ENCODE measurements at regions of chr4 and their contacts with region 1.

Region 1: DNA sequence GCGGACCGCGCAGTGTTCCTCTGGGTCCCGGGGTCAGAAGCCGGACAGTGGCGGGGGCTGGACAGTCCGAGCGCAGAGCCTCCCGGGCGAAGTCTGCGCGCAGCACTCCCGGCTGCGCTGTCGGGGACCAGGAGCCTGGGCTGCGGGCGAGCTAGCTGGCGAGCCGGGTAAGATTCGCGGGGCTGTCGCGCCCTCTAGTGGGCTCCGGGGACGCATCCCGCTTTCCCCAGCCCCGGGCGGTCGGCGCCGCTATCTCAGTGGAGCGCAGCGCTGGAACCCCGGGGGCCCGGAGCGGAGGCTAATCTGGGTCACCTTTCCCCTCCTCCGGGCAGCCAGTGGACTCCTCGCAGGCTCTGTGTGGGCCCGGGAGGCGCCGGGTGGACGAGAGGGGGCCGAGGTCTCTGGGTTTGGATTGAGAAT is 4.2 kb downstream of the PDGFRA start:
- DNase-seq: peak; percentile 81
- H3K4me3 ChIP-seq: peak overlapping the region; percentile 30 to 54 (median 52)
- H3K27ac ChIP-seq: no peak overlapping the region
- H3K4me1 ChIP-seq: peaks cover 21% of the 10 kb centered on the region
- H3K27me3 ChIP-seq: peaks cover 24% of the 10 kb centered on the region
- CTCF ChIP-seq: peak; percentile 36 to 88

Region 2: DNA sequence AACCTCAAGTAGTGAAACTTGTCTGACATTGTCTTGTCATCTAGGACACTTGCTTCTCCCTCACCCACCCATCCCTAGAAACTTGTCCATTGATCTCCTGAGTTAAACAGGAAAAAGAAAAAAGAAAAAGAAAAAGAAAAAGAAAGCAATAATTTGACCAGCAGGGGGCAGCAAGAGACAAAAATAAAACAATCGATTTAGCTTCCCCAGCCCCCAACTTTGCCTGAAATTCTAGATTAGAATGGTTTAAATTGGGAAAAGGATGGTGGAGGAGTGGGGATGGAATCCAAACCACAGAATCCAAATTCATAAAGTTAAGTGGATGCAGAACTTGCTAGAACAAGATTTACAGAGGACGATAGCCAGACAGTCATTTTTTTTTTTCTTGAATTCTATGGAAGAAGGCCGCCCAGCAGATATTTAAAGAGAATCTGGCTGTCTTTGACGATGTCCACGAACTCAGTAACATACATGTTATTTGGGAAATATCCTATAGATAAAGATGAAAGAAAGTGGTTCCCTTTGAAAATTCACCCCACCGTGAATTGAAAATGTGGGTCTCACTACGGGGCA is 1857.1 kb before region 1 on chr4:
- CTCF ChIA-PET with region 1: no interaction called
- dilution Hi-C with region 1: no loop called
- in situ Hi-C with region 1: no loop called
- intact Hi-C with region 1: loop called (anchors 1 kb)
- DNase-seq: peak; percentile 29
- H3K4me3 ChIP-seq: no peak overlapping the region
- H3K27ac ChIP-seq: no peak overlapping the region
- H3K4me1 ChIP-seq: no peaks in the 10 kb centered on the region
- H3K27me3 ChIP-seq: no peaks in the 10 kb centered on the region
- CTCF ChIP-seq: peak; percentile 37 to 55

Region 3: GRCh38 chr4:53015681-53016080 is 1217.6 kb before region 1 on chr4:
- CTCF ChIA-PET with region 1: interaction called, 5 read pairs
- dilution Hi-C with region 1: no loop called
- in situ Hi-C with region 1: loop called (anchors 25 kb)
- intact Hi-C with region 1: loop called (anchors 1 kb)
- DNase-seq: no peak
- H3K4me3 ChIP-seq: no peak overlapping the region
- H3K27ac ChIP-seq: no peak overlapping the region
- H3K4me1 ChIP-seq: no peaks in the 10 kb centered on the region
- H3K27me3 ChIP-seq: no peaks in the 10 kb centered on the region
- CTCF ChIP-seq: peak; percentile 59 to 64

Region 4: GRCh38 chr4:53490965-53491622 is 742.2 kb before region 1 on chr4:
- CTCF ChIA-PET with region 1: no interaction called
- dilution Hi-C with region 1: no loop called
- in situ Hi-C with region 1: no loop called
- intact Hi-C with region 1: loop called (anchors 5 kb)
- DNase-seq: peak; percentile 69
- H3K4me3 ChIP-seq: no peak overlapping the region
- H3K27ac ChIP-seq: no peak overlapping the region
- H3K4me1 ChIP-seq: peaks cover 4% of the 10 kb centered on the region
- H3K27me3 ChIP-seq: no peaks in the 10 kb centered on the region
- CTCF ChIP-seq: peak; percentile 70 to 84

Region 5: GRCh38 chr4:53653484-53654053 is 579.7 kb before region 1 on chr4:
- CTCF ChIA-PET with region 1: interaction called, 4 read pairs
- dilution Hi-C with region 1: no loop called
- in situ Hi-C with region 1: no loop called
- intact Hi-C with region 1: loop called (anchors 5 kb)
- DNase-seq: peak; percentile 12
- H3K4me3 ChIP-seq: no peak overlapping the region
- H3K27ac ChIP-seq: no peak overlapping the region
- H3K4me1 ChIP-seq: peaks cover 12% of the 10 kb centered on the region
- H3K27me3 ChIP-seq: no peaks in the 10 kb centered on the region
- CTCF ChIP-seq: peak; percentile 4 to 32

Region 6: GRCh38 chr4:53908661-53909078 is 324.6 kb before region 1 on chr4:
- CTCF ChIA-PET with region 1: interaction called, 18 read pairs
- dilution Hi-C with region 1: no loop called
- in situ Hi-C with region 1: loop called in 1 of 2 experiments (anchors 5 kb)
- intact Hi-C with region 1: loop called (anchors 1 kb)
- DNase-seq: peak; percentile 86
- H3K4me3 ChIP-seq: peak overlapping the region in 2 of 3 experiments; percentile 7 to 16
- H3K27ac ChIP-seq: peak overlapping the region; percentile 28
- H3K4me1 ChIP-seq: peaks cover 47% of the 10 kb centered on the region
- H3K27me3 ChIP-seq: no peaks in the 10 kb centered on the region
- CTCF ChIP-seq: peak; percentile 76 to 88

Region 7: DNA sequence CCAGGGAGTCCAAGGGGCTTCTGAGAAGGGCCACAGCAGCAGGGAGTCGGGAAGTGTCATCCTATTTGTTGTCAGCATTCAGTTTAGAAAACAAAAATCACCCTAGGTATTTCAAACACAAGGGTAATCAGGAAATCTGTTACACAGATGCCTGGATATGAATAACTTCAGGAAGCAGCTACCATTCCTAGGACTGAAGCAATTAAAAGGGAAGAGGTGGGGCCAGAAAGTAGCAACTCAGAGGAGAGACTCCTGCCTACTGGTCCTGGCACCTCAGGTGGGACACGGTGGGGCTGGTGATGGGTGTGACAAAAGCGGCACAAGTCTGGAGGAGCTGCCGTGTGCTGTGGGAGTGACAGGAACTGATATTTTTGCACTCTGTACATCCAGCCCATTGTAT is 103.7 kb after region 1 on chr4:
- CTCF ChIA-PET with region 1: no interaction called
- dilution Hi-C with region 1: no loop called
- in situ Hi-C with region 1: no loop called
- intact Hi-C with region 1: no loop called
- DNase-seq: no peak
- H3K4me3 ChIP-seq: no peak overlapping the region
- H3K27ac ChIP-seq: no peak overlapping the region
- H3K4me1 ChIP-seq: no peaks in the 10 kb centered on the region
- H3K27me3 ChIP-seq: no peaks in the 10 kb centered on the region
- CTCF ChIP-seq: no peak

Region 8: GRCh38 chr4:56112377-56112776 is 1879.1 kb after region 1 on chr4:
- CTCF ChIA-PET with region 1: no interaction called
- dilution Hi-C with region 1: no loop called
- in situ Hi-C with region 1: no loop called
- intact Hi-C with region 1: no loop called
- DNase-seq: no peak
- H3K4me3 ChIP-seq: no peak overlapping the region
- H3K27ac ChIP-seq: no peak overlapping the region
- H3K4me1 ChIP-seq: no peaks in the 10 kb centered on the region
- H3K27me3 ChIP-seq: peaks cover 1% of the 10 kb centered on the region
- CTCF ChIP-seq: no peak